MCF 10A (cell line): ENCODE measurements at regions of chr2 and their contacts with region 1.

Region 1: DNA sequence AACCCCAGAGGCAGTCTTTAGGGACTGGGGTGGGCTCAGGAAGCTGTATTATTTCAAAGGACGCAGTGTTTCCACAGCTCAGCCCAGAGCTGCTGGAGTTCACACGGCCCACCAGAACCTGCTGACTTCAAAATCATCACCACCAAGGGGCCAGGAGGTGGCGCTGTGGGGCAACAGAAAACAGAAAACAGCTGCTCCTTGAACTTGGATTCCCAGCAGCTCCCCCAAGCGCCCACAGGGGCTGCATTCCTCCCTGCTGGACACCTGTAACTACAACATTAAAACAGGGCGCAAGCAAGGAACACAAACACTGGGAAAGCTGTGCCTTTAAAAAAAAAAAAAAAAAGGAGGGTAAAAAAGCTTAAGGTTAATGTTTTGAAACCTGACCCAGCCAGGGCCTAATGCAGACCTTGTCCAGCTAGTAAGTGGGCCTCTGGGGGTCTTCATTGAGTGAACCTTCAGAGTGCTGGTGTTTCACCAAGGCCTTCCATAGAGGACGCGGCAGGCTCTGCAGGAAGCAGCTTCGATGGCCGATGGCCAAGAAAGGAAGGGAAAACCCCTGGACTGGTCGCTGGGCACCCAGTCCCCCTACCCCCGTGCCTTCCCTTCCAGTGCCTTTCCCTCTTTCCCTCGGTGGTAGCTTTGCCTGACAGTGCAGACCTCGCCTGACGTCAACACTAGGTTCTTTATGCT is 25.9 kb downstream of the MLPH start:
- DNase-seq: peak; percentile 90
- H3K4me3 Mint-ChIP-seq: no peak overlapping the region
- H3K27ac Mint-ChIP-seq: no peak overlapping the region
- H3K4me1 Mint-ChIP-seq: no peaks in the 10 kb centered on the region
- H3K27me3 Mint-ChIP-seq: no peaks in the 10 kb centered on the region
- CTCF ChIP-seq: peak; percentile 86

Region 2: DNA sequence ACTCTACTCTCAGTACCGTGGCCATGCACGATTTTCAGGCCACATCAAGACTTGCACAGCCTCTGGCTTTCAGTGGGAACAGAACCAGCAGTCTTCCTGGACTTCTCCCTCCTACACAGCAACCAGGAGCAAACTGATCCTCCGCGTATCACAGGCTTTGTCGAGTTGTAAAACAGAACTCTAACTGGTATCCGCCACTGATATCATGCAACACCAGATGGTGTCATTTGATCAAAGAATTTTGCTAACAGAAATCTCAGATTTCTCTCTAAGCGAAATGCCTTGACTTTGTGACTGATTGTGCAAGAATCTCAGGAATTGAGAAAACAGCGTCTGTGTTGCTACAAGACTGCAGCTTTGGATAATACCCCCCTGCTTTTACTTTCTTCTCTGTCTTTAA is 341.5 kb before region 1 on chr2:
- CTCF ChIA-PET with region 1: interaction called, 3 read pairs
- POLR2A ChIA-PET with region 1: no interaction called
- intact Hi-C with region 1: loop called (anchors 1 kb)
- DNase-seq: peak; percentile 88
- H3K4me3 Mint-ChIP-seq: no peak overlapping the region
- H3K27ac Mint-ChIP-seq: peak overlapping the region; percentile 84
- H3K4me1 Mint-ChIP-seq: peaks cover 14% of the 10 kb centered on the region
- H3K27me3 Mint-ChIP-seq: no peaks in the 10 kb centered on the region
- CTCF ChIP-seq: peak; percentile 38

Region 3: DNA sequence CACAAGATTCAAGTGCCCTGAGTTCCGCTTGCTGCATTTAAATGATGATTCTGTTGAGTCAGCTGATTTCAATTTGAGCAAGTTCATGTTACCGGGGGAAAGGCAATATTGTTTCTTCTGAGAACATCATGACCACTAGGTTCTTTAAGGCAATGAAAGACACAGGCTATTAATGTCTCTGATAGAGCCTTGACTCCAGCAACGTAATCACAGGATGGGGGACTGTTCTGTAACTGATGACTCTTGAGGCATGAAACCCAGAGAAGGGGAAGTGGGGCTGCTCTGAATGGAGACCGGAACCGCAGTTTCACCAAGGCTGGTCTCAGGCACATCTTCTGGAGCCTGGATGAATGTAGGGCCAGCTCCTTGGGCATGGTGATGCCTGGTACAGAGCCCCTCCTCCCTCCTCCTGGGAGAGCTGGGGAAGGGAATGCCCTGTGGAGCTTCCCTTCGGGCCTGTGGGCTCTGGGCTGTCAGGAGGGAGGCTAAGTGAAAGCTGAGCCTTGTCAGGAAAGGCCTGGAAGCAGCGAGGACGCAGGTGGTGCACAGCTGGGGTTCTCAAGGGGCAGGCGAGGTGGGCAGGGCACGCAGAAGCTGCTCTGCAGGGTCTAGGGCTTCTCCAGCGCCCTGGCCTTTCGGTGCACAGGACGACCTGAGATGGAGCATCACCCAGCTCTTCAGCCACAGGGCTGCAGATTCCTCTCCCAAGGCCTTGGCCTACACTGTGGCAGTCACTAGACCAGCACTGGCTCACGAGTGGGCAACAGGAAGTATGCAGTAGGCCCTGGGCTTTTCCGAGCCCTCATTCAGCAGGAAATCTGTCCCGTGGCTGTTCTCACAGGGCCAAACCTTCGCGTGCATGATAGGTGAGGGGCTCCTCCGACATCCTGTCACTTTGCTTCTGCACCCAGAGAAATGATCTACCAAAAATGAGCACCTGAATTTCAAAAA is 16.8 kb after region 1 on chr2:
- CTCF ChIA-PET with region 1: interaction called, 19 read pairs
- POLR2A ChIA-PET with region 1: no interaction called
- intact Hi-C with region 1: no loop called
- DNase-seq: no peak
- H3K4me3 Mint-ChIP-seq: no peak overlapping the region
- H3K27ac Mint-ChIP-seq: no peak overlapping the region
- H3K4me1 Mint-ChIP-seq: no peaks in the 10 kb centered on the region
- H3K27me3 Mint-ChIP-seq: no peaks in the 10 kb centered on the region
- CTCF ChIP-seq: no peak

Region 4: GRCh38 chr2:237558906-237559641 is 46.2 kb after region 1 on chr2:
- CTCF ChIA-PET with region 1: interaction called, 24 read pairs
- POLR2A ChIA-PET with region 1: interaction called, 7 read pairs
- intact Hi-C with region 1: no loop called
- DNase-seq: peak; percentile 86
- H3K4me3 Mint-ChIP-seq: peak overlapping the region; percentile 34
- H3K27ac Mint-ChIP-seq: no peak overlapping the region
- H3K4me1 Mint-ChIP-seq: peaks cover 25% of the 10 kb centered on the region
- H3K27me3 Mint-ChIP-seq: peaks cover 11% of the 10 kb centered on the region
- CTCF ChIP-seq: no peak

Region 5: DNA sequence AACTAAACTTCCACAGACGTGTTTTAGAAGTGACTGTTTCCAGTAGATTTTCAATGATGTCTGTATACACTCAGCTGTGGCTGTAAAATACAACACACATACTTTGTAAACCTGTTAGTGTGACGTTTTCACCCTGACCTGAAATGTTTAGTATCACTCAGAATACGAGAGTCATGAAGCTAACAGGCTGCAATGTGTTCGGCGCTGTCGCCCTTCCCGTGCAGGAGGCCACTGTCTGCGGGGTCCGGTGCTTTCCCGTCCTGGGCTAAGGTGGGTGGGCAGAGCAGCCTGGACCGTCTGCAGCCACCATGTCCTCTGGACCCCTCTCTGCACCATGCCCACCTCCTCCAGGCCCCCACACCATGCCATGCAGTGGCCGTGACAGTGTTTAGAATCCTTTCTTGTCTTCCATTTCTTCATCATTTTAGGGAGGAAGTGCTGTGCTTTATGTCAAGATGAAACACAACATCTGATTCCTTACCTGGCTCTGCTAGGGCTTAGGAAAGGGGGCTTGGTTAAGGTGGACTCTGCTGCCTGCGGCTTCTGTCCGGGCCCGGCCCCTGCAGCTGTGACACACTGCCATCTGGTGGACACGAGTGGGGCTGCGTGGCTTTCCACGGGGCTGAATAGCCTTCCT is 231.8 kb after region 1 on chr2:
- CTCF ChIA-PET with region 1: interaction called, 4 read pairs
- POLR2A ChIA-PET with region 1: no interaction called
- intact Hi-C with region 1: loop called (anchors 1 kb)
- DNase-seq: peak; percentile 55
- H3K4me3 Mint-ChIP-seq: no peak overlapping the region
- H3K27ac Mint-ChIP-seq: peak overlapping the region; percentile 33
- H3K4me1 Mint-ChIP-seq: peaks cover 19% of the 10 kb centered on the region
- H3K27me3 Mint-ChIP-seq: no peaks in the 10 kb centered on the region
- CTCF ChIP-seq: peak; percentile 92